Cardiac septum (tissue), 1 donor: ENCODE measurements at regions of chrX and their contacts with region 1.

Region 1: GRCh38 chrX:13478740-13479451 is 90.5 kb upstream of the EGFL6 start:
- DNase-seq: no peak

Region 2: GRCh38 chrX:13380211-13380610 is 98.7 kb before region 1 on chrX:
- intact Hi-C with region 1: loop called (anchors 5 kb)
- DNase-seq: no peak

Region 3: DNA sequence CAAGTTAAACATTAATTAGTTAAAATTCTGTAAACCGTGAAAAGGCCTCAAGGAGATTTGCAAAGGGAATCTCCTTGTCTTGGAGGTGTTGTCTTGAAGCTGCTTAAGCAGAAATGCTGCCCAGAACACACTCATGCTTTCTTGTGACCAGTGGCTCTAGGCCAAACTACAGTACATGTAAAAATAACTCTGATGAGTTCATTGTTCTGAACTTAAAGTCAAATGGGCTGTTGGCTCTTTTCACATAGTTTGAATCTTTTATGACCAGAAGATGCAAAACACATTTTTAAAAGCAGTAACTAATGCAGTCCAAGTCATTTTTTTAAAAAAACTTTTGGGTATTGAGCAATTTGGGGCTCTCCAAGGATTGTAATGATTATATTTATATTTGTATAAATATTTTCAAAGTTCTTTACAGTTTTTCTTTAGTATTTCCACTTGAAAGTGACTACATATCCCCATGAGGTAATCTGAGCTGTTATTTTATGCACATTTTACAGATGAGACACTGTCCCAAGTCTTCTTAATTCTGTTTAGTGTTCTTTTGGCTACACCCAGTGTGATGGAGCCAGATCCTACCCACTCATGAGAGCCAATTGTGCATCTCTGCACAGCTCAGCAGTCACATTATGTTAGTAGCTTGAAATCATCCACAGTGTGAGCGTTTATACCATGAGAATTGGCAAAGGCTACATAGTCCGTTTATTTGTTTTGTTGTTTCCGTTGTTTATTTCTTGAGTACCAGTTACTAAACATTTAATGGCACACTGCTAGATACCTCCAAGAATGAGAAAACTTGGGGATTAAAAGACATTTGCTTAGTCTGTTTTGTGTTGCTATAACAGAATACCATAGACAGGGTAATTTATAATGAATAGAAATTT is 46.2 kb before region 1 on chrX:
- intact Hi-C with region 1: loop called (anchors 5 kb)
- DNase-seq: no peak